IMR-90 (cell line): ENCODE measurements at regions of chr2 and their contacts with region 1.

Region 1: DNA sequence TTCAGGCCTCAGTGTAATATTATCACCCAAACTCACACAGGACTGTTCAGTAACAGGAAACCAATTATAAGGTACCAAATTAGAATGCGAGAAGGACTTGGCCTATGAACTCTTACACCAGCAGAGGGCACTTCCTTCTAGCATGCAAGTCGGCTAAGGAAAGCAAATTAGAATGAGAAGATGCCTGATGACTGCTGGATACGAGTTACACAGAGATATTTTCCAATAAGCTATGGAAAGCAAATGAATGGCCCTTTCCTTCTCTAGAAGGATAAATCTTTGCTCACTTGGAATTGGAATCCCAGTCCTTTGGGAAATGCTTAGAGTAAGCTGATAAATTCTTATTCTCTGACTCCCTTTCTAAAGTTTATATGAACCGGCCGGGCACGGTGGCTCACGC is 109.8 kb downstream of the AP1S3 start:
- DNase-seq: peak; percentile 75
- ATAC-seq: peak; percentile 35
- H3K4me3 ChIP-seq: no peak overlapping the region
- H3K27ac ChIP-seq: peak overlapping the region; percentile 30; the same call in 1 of the 2 replicates
- H3K4me1 ChIP-seq: peaks cover 18% of the 10 kb centered on the region
- H3K27me3 ChIP-seq: no peaks in the 10 kb centered on the region
- CTCF ChIP-seq: peak; percentile 49
- POLR2A ChIP-seq: no peak
- RAD21 ChIP-seq: peak; percentile 42; the same call in 1 of the 2 replicates

Region 2: DNA sequence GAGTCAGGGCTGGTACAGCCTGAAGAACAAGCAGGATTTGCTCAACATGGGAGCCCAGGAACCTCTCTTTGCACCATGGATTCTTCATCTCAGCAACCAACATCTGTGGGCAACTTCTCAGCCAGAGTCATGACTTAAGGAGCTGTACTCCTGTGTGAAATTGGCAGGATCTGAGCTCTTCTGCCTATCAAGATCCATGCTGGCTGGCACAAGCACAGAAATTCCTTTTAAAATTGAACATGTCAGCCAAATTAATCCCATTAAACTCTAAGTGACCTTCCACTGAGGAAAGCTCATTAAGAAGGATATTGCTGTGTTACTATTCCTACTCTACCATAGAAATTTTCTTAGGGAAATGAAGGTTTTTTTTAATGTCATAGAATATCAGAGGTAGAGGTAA is 14.9 kb before region 1 on chr2:
- CTCF ChIA-PET with region 1: interaction called, 4 read pairs
- POLR2A ChIA-PET with region 1: no interaction called
- dilution Hi-C with region 1: no loop called
- in situ Hi-C with region 1: no loop called
- intact Hi-C with region 1: loop called (anchors 2 kb)
- DNase-seq: no peak
- ATAC-seq: no peak
- H3K4me3 ChIP-seq: no peak overlapping the region
- H3K27ac ChIP-seq: no peak overlapping the region
- H3K4me1 ChIP-seq: peaks cover 2% of the 10 kb centered on the region; the same call in 1 of the 2 replicates
- H3K27me3 ChIP-seq: no peaks in the 10 kb centered on the region
- CTCF ChIP-seq: no peak
- POLR2A ChIP-seq: no peak
- RAD21 ChIP-seq: no peak

Region 3: GRCh38 chr2:223846525-223846924 is 119.0 kb after region 1 on chr2:
- CTCF ChIA-PET with region 1: no interaction called
- POLR2A ChIA-PET with region 1: no interaction called
- dilution Hi-C with region 1: no loop called
- in situ Hi-C with region 1: no loop called
- intact Hi-C with region 1: no loop called
- DNase-seq: peak; percentile 93
- ATAC-seq: peak; percentile 95
- H3K4me3 ChIP-seq: no peak overlapping the region
- H3K27ac ChIP-seq: peak overlapping the region; percentile 67
- H3K4me1 ChIP-seq: peaks cover 3% of the 10 kb centered on the region
- H3K27me3 ChIP-seq: no peaks in the 10 kb centered on the region
- CTCF ChIP-seq: no peak
- POLR2A ChIP-seq: no peak
- RAD21 ChIP-seq: no peak

Region 4: GRCh38 chr2:223970343-223971128 is 243.0 kb after region 1 on chr2:
- CTCF ChIA-PET with region 1: no interaction called
- POLR2A ChIA-PET with region 1: no interaction called
- dilution Hi-C with region 1: no loop called
- in situ Hi-C with region 1: no loop called
- intact Hi-C with region 1: no loop called
- DNase-seq: peak; percentile 67
- ATAC-seq: peak; percentile 80
- H3K4me3 ChIP-seq: no peak overlapping the region
- H3K27ac ChIP-seq: no peak overlapping the region
- H3K4me1 ChIP-seq: no peaks in the 10 kb centered on the region
- H3K27me3 ChIP-seq: no peaks in the 10 kb centered on the region
- CTCF ChIP-seq: peak; percentile 95
- POLR2A ChIP-seq: no peak
- RAD21 ChIP-seq: peak; percentile 92